ENCODE measurements at regions of chr4 and their contacts with region 1.

Region 1: GRCh38 chr4:83217721-83218522 is 66.7 kb downstream of the COQ2 start:
- DNase-seq: peak; percentile 74
- H3K4me3 Mint-ChIP-seq: peak overlapping the region; percentile 56
- H3K27ac Mint-ChIP-seq: peak overlapping the region; percentile 84
- H3K4me1 Mint-ChIP-seq: peaks cover 64% of the 10 kb centered on the region
- H3K27me3 Mint-ChIP-seq: peaks cover 13% of the 10 kb centered on the region

Region 2: GRCh38 chr4:82890901-82891706 is 326.8 kb before region 1 on chr4 and contains the start of gene SEC31A:
- intact Hi-C with region 1: no loop called
- DNase-seq: peak; percentile 96
- H3K4me3 Mint-ChIP-seq: peak within 1 kb of the TSS; percentile 89
- H3K27ac Mint-ChIP-seq: peak within 1 kb of the TSS; percentile 91
- H3K4me1 Mint-ChIP-seq: peaks cover 43% of the 10 kb centered on the region
- H3K27me3 Mint-ChIP-seq: no peaks in the 10 kb centered on the region
- total RNA-seq, gene SEC31A: 138 and 142 TPM in 2 replicates

Region 3: DNA sequence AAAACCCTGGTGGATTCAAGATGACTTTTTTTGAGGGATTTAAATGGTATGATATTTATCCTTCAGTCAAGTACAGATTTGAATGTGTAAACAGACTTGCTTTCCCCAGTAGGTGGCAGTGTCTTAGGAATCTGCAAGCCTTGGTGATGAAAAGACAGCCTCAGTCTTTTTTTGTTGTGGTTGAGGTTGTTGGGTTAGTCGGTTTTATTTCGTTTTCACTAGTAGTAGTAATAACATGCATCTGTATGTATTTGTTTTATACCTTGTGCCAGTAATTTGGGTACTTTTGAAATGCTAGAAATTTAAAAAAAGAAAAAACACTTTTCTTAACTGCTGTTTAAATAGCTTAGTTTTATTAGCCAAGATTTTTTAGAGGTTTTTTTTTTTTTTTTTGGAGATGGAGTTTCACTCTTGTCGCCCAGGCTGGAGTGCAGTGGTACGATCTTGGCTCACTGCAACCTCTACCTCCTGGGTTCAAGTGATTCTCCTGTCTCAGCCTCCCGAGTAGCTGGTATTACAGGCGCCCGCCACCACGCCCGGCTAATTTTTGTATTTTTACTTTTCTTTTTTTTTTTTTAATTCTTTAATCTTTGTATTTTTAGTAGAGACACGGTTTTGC is 143.7 kb before region 1 on chr4:
- intact Hi-C with region 1: loop called (anchors 1 kb)
- DNase-seq: peak; percentile 62
- H3K4me3 Mint-ChIP-seq: no peak overlapping the region
- H3K27ac Mint-ChIP-seq: no peak overlapping the region
- H3K4me1 Mint-ChIP-seq: peaks cover 26% of the 10 kb centered on the region
- H3K27me3 Mint-ChIP-seq: no peaks in the 10 kb centered on the region

Region 4: DNA sequence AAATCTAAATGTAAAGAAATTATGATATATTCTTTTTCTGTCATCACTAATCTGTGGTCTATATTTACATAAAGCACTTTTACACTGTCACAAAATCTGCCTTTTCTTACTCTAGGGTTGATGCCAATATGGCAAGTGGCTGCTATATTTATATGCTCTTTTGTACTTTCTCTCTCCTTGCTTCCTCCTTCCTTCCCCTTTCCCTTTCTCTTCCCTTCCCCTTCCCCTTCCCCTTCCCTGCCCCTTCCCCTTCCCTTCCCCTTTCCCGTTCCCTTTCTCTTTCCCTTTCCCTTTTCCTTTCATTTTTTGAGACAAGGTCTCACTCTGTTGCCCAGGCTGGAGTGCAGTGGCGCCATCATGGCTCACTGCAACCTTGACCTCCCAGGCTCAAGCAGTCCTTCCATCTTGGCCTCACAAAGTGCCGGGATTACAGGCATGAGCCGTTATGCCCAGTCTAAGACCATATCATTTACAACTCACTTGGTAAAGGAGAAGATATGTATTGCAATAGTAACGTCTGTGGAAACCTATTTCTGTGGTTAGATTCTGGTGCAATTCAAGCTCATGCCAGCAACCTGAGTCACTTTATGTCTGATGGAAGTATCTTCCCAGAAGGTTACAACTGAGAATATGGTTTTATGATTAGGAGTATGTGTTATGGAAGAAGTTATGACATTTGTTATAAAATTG is 89.5 kb before region 1 on chr4:
- intact Hi-C with region 1: loop called (anchors 1 kb)
- DNase-seq: no peak
- H3K4me3 Mint-ChIP-seq: no peak overlapping the region
- H3K27ac Mint-ChIP-seq: no peak overlapping the region
- H3K4me1 Mint-ChIP-seq: peaks cover 16% of the 10 kb centered on the region
- H3K27me3 Mint-ChIP-seq: peaks cover 5% of the 10 kb centered on the region

Region 5: DNA sequence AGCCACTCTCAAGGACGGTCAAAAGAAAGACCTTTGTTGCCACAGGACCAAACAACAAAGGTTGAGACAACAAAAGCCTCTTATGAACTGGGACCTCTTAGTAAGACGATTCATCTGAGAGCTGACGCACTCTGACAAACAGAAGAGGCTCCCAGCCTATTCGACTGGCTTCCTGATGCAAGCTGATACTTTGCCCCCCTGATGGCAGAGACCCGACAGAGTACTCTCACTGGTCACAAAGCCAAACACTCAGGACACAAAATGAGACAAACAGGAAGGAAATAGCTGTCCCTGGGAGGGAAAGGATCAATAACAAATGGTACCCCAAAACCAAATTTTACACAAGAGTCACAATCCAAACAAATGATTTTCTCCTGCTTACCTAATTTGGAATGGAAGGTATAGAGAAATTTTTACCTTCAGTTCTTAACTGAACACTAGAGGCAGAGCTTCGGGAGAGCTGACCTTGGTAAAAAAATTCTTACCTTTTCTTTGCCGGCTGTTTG is 28.2 kb before region 1 on chr4:
- intact Hi-C with region 1: no loop called
- DNase-seq: no peak
- H3K4me3 Mint-ChIP-seq: no peak overlapping the region
- H3K27ac Mint-ChIP-seq: no peak overlapping the region
- H3K4me1 Mint-ChIP-seq: peaks cover 11% of the 10 kb centered on the region
- H3K27me3 Mint-ChIP-seq: no peaks in the 10 kb centered on the region

Region 6: GRCh38 chr4:83267121-83267829 is 49.4 kb after region 1 on chr4:
- intact Hi-C with region 1: loop called (anchors 1 kb)
- DNase-seq: no peak
- H3K4me3 Mint-ChIP-seq: no peak overlapping the region
- H3K27ac Mint-ChIP-seq: no peak overlapping the region
- H3K4me1 Mint-ChIP-seq: peaks cover 29% of the 10 kb centered on the region
- H3K27me3 Mint-ChIP-seq: no peaks in the 10 kb centered on the region

Region 7: GRCh38 chr4:83558680-83559079 is 340.8 kb after region 1 on chr4:
- intact Hi-C with region 1: loop called (anchors 2 kb)
- DNase-seq: no peak
- H3K4me3 Mint-ChIP-seq: peak overlapping the region; percentile 2
- H3K27ac Mint-ChIP-seq: peak overlapping the region; percentile 58
- H3K4me1 Mint-ChIP-seq: peaks cover 56% of the 10 kb centered on the region
- H3K27me3 Mint-ChIP-seq: peaks cover 13% of the 10 kb centered on the region

Measured in activated T-helper 2 cell treated with anti-CD3 and anti-CD28 coated beads, Interferon-gamma antibody, Interleukin-2, Interleukin-4, amounts not matched to agents 10 μg/mL and 5 μg/mL and 100 μg/mL, durations not matched to agents 14 hours and 24 hours and 36 hours (primary cell).